ENCODE measurements at regions of chr9 and their contacts with region 1.

Region 1: GRCh38 chr9:104991144-104991953 is 63.4 kb upstream of the ABCA1 start:
- H3K4me3 Mint-ChIP-seq: peak overlapping the region; percentile 74
- H3K27ac Mint-ChIP-seq: peak overlapping the region; percentile 87
- H3K4me1 Mint-ChIP-seq: peaks cover 45% of the 10 kb centered on the region
- H3K27me3 Mint-ChIP-seq: peaks cover 16% of the 10 kb centered on the region

Region 2: GRCh38 chr9:104863180-104863883 is 128.0 kb before region 1 on chr9:
- intact Hi-C with region 1: loop called (anchors 10 kb)
- H3K4me3 Mint-ChIP-seq: no peak overlapping the region
- H3K27ac Mint-ChIP-seq: no peak overlapping the region
- H3K4me1 Mint-ChIP-seq: peaks cover 83% of the 10 kb centered on the region
- H3K27me3 Mint-ChIP-seq: no peaks in the 10 kb centered on the region

Region 3: GRCh38 chr9:105007143-105007542 is 15.8 kb after region 1 on chr9:
- intact Hi-C with region 1: loop called (anchors 1 kb)
- H3K4me3 Mint-ChIP-seq: peak overlapping the region; percentile 63
- H3K27ac Mint-ChIP-seq: peak overlapping the region; percentile 88
- H3K4me1 Mint-ChIP-seq: peaks cover 43% of the 10 kb centered on the region
- H3K27me3 Mint-ChIP-seq: peaks cover 12% of the 10 kb centered on the region

Region 4: DNA sequence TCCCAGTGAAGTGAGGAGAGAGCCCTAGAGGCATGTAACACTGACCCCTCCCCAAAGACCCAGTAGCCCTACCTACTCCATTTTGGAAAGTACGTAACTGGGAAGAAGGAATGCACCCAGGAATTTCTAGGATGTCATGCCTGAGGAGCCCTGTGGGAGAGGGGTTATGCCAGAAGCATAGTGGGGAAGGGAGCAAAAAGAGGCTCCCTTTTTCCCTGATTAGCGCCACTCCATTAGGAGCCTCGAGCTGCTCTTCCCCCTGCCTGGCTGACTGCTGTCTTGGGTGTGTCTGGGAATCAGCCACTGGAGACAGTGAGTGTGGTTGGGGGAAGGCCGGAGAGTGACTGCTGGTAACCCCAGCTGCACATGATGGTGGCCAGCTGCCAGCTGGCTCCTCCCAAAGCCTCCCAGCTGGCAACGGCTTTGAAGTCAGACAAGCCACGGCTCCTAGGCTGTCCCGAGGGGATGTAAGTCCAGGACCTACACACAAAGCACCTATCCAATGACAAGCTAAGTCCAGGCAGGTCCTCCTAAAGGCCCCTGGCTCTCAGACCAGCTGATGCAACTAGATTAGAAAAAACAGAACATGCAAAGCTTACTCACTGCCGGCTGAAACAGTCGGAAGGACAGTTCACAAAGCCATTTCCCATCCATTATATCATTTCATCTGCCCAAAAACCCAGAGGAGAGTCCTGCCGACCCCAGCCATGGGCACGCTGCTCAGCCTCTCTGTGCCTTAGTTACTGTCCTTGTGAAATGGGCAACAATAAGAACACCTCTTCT is 73.2 kb after region 1 on chr9:
- intact Hi-C with region 1: loop called (anchors 5 kb)
- H3K4me3 Mint-ChIP-seq: peak overlapping the region; percentile 54
- H3K27ac Mint-ChIP-seq: peak overlapping the region; percentile 92
- H3K4me1 Mint-ChIP-seq: peaks cover 67% of the 10 kb centered on the region
- H3K27me3 Mint-ChIP-seq: peaks cover 4% of the 10 kb centered on the region